ENCODE measurements at regions of chr1 and their contacts with region 1.

Region 1: GRCh38 chr1:110106013-110106941 is 6.0 kb upstream of the UBL4B start:
- DNase-seq: no peak

Region 2: DNA sequence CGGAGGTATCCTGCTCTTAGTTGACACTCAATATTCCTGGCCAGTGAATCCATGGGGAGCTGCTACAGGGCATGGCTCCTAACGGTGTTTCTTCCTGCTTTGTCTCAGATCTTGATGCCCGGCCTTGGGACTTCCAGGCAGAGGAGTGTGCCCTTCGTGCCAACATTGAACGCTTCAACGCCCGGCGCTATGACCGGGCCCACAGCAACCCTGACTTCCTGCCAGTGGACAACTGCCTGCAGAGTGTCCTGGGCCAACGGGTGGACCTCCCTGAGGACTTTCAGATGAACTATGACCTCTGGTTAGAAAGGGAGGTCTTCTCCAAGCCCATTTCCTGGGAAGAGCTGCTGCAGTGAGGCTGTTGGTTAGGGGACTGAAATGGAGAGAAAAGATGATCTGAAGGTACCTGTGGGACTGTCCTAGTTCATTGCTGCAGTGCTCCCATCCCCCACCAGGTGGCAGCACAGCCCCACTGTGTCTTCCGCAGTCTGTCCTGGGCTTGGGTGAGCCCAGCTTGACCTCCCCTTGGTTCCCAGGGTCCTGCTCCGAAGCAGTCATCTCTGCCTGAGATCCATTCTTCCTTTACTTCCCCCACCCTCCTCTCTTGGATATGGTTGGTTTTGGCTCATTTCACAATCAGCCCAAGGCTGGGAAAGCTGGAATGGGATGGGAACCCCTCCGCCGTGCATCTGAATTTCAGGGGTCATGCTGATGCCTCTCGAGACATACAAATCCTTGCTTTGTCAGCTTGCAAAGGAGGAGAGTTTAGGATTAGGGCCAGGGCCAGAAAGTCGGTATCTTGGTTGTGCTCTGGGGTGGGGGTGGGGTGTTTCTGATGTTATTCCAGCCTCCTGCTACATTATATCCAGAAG is 52.5 kb before region 1 on chr1:
- intact Hi-C with region 1: loop called (anchors 2 kb)
- DNase-seq: no peak

Measured in posterior vena cava (tissue), 2 donors.